ENCODE measurements at regions of chr2 and their contacts with region 1.

Region 1: DNA sequence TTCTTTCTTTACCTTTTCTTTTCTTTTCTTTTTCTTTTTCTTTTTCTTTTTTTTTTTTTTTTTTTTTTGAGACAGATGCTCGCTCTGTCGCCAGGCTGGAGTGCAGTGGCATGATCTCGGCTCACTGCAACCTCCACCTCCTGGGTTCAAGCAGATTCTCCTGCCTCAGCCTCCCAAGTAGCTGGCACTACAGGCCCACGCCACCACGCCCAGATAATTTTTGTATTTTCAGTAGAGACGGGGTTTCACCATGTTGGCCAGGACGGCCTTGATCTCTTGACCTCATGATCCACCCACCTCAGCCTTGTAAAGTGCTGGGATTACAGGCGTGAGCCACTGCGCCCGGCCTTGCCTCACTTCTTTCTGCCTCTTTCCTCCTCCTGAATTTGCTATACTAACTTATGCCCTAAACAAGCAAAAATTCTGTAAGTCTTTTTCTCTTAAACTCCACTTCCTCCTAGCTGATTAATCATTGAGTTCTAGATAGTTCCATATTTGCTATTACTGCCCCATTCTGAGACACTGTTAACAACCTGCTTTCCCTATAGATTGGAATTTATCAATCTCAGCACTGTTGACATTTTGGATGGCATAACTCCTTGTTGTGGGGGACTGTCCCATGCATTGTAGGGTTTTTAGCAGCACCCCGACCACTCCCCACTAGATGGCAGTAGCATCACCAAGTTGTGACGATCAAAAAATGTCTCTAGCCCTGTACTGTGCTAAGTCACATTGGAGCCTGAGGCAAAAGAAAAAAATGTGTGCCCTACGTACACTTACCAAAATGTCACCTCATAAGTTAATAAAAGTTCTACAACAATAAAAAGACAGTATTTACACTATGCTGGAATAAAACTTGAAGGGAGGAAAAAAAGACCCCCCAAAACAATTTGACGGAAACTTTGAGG is 16.4 kb upstream of the THADA start:
- DNase-seq: peak; percentile 78
- ATAC-seq: peak; percentile 91
- H3K4me3 ChIP-seq: no peak overlapping the region
- H3K4me3 Mint-ChIP-seq: no peak overlapping the region
- H3K27ac ChIP-seq: no peak overlapping the region
- H3K27ac Mint-ChIP-seq: no peak overlapping the region
- H3K4me1 ChIP-seq: no peaks in the 10 kb centered on the region
- H3K4me1 Mint-ChIP-seq: no peaks in the 10 kb centered on the region
- H3K27me3 ChIP-seq: peaks cover 0 to 4% (median 1%) of the 10 kb centered on the region in 4 experiments
- H3K27me3 Mint-ChIP-seq: peaks cover 9% of the 10 kb centered on the region
- CTCF ChIP-seq: peak; percentile 81

Region 2: DNA sequence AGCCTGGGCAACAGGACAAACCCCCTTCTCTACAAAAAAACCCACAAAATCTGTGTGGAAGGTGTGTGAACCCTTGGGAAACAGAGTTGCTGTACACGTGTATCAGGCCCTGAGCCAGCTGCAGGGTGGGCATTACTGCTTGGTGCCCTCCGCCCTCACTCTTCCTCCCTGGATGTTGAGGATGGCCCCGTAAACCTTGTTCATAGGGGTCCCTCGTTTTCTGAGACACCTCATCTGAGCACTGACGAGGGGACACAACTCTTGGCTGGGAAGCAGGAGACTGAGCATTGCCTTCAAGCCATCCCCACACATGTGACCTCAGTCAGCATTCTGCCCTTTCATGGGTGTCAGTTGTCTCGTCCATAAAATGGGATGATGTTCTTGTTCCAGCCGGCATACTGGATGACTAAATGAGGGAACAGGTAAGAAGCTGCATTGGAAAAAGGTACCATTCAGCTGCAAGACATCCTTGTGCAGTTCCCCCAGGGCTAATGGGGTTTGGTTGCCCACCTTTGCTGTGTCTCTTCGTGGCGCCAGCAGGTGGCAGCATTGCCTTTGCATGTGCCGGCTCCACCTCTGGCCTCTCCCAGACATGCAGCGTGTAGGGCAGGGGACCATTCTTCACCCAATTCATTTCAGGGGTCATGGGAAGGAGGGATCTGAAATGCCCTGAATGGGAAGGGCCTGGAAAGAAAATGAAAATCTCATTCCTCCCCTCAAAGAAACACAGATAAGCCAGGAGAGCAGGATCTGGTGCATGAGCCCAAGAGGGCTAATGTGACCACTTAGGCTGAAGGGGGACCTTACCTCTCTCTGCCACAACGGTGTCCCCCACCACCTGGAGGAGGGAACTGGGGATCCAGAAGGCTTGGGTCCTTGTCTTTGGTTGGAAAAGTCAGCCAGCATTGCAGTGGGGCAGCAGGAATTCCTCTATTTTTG is 783.5 kb before region 1 on chr2:
- CTCF ChIA-PET with region 1: interaction called, 33 read pairs
- POLR2A ChIA-PET with region 1: no interaction called
- intact Hi-C with region 1: loop called (anchors 1 kb)
- DNase-seq: peak; percentile 82
- ATAC-seq: peak; percentile 95
- H3K4me3 ChIP-seq: no peak overlapping the region
- H3K4me3 Mint-ChIP-seq: peak overlapping the region; percentile 39
- H3K27ac ChIP-seq: no peak overlapping the region
- H3K27ac Mint-ChIP-seq: peak overlapping the region; percentile 26
- H3K4me1 ChIP-seq: peaks cover 8 to 13% of the 10 kb centered on the region in 2 donors
- H3K4me1 Mint-ChIP-seq: peaks cover 16% of the 10 kb centered on the region
- H3K27me3 ChIP-seq: no peaks in the 10 kb centered on the region
- H3K27me3 Mint-ChIP-seq: peaks cover 3% of the 10 kb centered on the region
- CTCF ChIP-seq: peak; percentile 92

Region 3: GRCh38 chr2:43595603-43596412 is 16.4 kb before region 1 on chr2 and contains the start of gene THADA:
- CTCF ChIA-PET with region 1: interaction called, 39 read pairs
- POLR2A ChIA-PET with region 1: no interaction called
- intact Hi-C with region 1: loop called (anchors 1 kb)
- DNase-seq: peak; percentile 98
- ATAC-seq: peak; percentile 98
- H3K4me3 ChIP-seq: peak within 1 kb of the TSS; percentile 69 to 94 (median 80)
- H3K4me3 Mint-ChIP-seq: peak within 1 kb of the TSS; percentile 98
- H3K27ac ChIP-seq: peak within 1 kb of the TSS; percentile 94
- H3K27ac Mint-ChIP-seq: peak within 1 kb of the TSS; percentile 96
- H3K4me1 ChIP-seq: peaks cover 12 to 21% of the 10 kb centered on the region in 2 donors
- H3K4me1 Mint-ChIP-seq: peaks cover 24% of the 10 kb centered on the region
- H3K27me3 ChIP-seq: no peaks in the 10 kb centered on the region
- H3K27me3 Mint-ChIP-seq: peaks cover 3% of the 10 kb centered on the region
- CTCF ChIP-seq: no peak
- total RNA-seq, gene THADA: 48.5 and 53.7 TPM in 2 replicates

Region 4: GRCh38 chr2:43724728-43725526 is 112.7 kb after region 1 on chr2:
- CTCF ChIA-PET with region 1: no interaction called
- POLR2A ChIA-PET with region 1: no interaction called
- intact Hi-C with region 1: no loop called
- DNase-seq: no peak
- ATAC-seq: no peak
- H3K4me3 ChIP-seq: no peak overlapping the region
- H3K4me3 Mint-ChIP-seq: no peak overlapping the region
- H3K27ac ChIP-seq: no peak overlapping the region
- H3K27ac Mint-ChIP-seq: no peak overlapping the region
- H3K4me1 ChIP-seq: no peaks in the 10 kb centered on the region
- H3K4me1 Mint-ChIP-seq: no peaks in the 10 kb centered on the region
- H3K27me3 ChIP-seq: no peaks in the 10 kb centered on the region
- H3K27me3 Mint-ChIP-seq: peaks cover 25% of the 10 kb centered on the region
- CTCF ChIP-seq: no peak

Region 5: DNA sequence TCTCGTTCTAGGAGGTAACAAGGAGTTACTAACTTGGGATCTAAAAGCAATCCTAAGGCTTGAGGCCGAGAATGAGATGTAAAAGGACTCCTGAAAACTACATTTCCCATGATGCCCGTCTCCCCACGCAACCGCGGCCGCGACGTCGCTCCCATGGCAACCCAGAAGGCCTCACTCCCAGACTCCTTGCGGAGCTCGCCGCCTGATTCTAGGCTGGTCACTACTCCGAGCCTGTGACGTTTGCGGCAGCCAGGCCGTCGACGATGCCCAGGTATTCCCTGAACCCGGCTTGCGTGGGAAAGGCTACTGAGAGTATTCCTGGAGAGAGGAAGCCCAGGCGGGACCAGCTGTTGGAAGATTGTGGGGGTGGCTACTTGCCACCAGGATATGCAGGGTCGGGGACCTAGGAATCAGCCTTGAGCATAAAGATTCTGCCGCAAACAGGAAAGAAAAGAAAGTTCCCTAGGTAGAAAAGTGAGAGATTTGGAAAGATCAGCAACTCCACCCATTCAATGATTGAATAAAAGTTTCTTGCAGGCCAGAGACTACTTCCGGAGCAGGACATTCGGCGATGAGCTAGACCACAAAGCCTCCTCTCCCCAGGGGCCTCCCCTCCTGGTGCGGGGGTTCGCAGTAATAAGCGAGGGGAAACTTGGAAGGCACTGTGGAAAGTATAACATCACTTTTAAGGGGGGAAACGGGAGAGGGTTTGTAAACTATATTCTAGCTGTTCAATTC is 161.8 kb after region 1 on chr2 and contains the start of gene DYNC2LI1:
- CTCF ChIA-PET with region 1: no interaction called
- POLR2A ChIA-PET with region 1: no interaction called
- intact Hi-C with region 1: no loop called
- DNase-seq: peak; percentile 83
- ATAC-seq: peak; percentile 99
- H3K4me3 ChIP-seq: peak within 1 kb of the TSS; percentile 76 to 89 (median 82)
- H3K4me3 Mint-ChIP-seq: peak within 1 kb of the TSS; percentile 98
- H3K27ac ChIP-seq: peak within 1 kb of the TSS in 1 of 2 donors; percentile 69
- H3K27ac Mint-ChIP-seq: peak within 1 kb of the TSS; percentile 82
- H3K4me1 ChIP-seq: peaks cover 0 to 11% of the 10 kb centered on the region in 2 donors
- H3K4me1 Mint-ChIP-seq: peaks cover 13% of the 10 kb centered on the region
- H3K27me3 ChIP-seq: no peaks in the 10 kb centered on the region
- H3K27me3 Mint-ChIP-seq: peaks cover 16% of the 10 kb centered on the region
- CTCF ChIP-seq: no peak
- total RNA-seq, gene DYNC2LI1: 11.4 and 12.7 TPM in 2 replicates